H1 (cell line): ENCODE measurements at regions of chr13 and their contacts with region 1.

Region 1: GRCh38 chr13:35818633-35819067 is 312.5 kb downstream of the DCLK1 start:
- DNase-seq: no peak
- H3K4me3 ChIP-seq: no peak overlapping the region
- H3K27ac ChIP-seq: no peak overlapping the region
- H3K4me1 ChIP-seq: peaks cover 0 to 4% (median 4%) of the 10 kb centered on the region in 4 experiments; a peak in 3 of 7 replicates
- H3K27me3 ChIP-seq: no peaks in the 10 kb centered on the region; a peak in 1 of 7 replicates
- CTCF ChIP-seq: peak in 2 of 3 experiments; percentile 30 to 46; a peak in 2 of 4 replicates
- EP300 ChIP-seq: no peak
- POLR2A ChIP-seq: no peak
- RAD21 ChIP-seq: peak; percentile 56 to 61

Region 2: DNA sequence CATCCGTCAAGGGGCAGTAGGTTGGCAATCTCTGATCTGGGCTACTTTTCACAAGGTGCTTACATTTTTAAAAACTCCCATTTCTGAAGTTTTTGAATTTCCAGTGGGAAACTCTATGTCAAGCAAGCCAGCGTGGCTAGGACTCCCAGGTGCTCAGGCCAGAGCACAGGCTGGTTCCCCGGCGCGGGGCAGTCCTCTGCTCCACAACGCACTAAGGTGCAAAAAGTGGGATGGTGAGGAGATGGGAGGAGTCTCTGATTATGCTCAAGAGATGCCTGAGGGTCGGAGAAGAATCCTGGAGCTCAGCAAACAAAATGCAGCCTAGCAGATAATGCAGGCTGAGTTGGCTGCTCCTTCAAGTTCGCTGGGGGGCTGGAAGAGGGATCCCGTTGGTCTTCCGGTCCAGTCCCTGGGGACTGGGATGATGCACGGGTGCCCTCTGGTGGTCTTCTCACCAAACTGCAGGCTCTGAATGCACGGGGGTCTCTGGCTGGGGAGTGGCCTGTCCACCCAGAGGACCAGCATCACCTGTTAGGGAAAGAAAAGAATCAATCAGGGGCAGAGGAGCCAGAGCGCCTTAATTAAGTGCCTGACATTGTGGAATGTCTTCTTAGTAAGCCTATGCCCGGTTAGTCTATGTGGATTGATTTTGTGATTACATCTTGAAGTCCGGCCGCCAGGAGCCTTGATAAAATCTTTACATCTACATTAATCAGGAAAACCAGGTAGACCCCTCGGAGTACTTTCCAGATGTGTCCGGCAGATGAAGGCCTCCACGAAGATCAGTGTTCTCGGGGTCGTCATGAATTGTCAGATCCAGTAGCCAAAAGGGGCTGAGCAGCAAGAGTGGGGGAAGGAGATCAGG is 97.7 kb before region 1 on chr13:
- CTCF ChIA-PET with region 1: interaction called, 14 read pairs
- POLR2A ChIA-PET with region 1: interaction called, 3 read pairs
- DNase-seq: peak; percentile 60 to 93
- H3K4me3 ChIP-seq: no peak overlapping the region
- H3K27ac ChIP-seq: no peak overlapping the region
- H3K4me1 ChIP-seq: no peaks in the 10 kb centered on the region
- H3K27me3 ChIP-seq: no peaks in the 10 kb centered on the region
- CTCF ChIP-seq: peak; percentile 94 to 98 (median 96)
- EP300 ChIP-seq: no peak
- POLR2A ChIP-seq: no peak
- RAD21 ChIP-seq: peak; percentile 99

Region 3: GRCh38 chr13:35797991-35798390 is 20.7 kb before region 1 on chr13:
- CTCF ChIA-PET with region 1: interaction called, 23 read pairs
- POLR2A ChIA-PET with region 1: no interaction called
- DNase-seq: no peak
- H3K4me3 ChIP-seq: no peak overlapping the region
- H3K27ac ChIP-seq: no peak overlapping the region
- H3K4me1 ChIP-seq: peaks cover 0 to 3% (median 0%) of the 10 kb centered on the region in 4 experiments; a peak in 1 of 7 replicates
- H3K27me3 ChIP-seq: no peaks in the 10 kb centered on the region
- CTCF ChIP-seq: no peak
- EP300 ChIP-seq: no peak
- POLR2A ChIP-seq: no peak
- RAD21 ChIP-seq: no peak

Region 4: DNA sequence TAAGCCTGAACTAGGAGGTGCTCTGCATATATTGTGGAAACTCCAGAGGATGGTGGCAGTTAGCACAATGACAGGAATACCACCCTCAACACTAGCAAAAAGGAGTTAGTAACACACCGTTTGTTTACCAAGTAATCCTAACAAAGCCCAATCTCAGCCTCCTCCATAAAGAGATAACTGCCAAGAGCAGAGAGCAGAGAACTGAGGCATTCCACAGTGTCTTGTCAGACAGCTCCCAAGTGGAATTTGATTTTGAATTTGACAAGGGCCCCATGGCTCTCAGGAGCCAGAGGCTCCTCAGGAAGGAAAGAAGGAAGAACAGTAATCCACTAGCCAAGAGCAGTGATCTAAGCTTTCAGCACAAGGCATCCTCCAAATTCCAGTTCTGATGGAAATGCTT is 13.9 kb after region 1 on chr13:
- CTCF ChIA-PET with region 1: interaction called, 60 read pairs
- POLR2A ChIA-PET with region 1: interaction called, 3 read pairs
- DNase-seq: no peak
- H3K4me3 ChIP-seq: no peak overlapping the region
- H3K27ac ChIP-seq: no peak overlapping the region
- H3K4me1 ChIP-seq: no peaks in the 10 kb centered on the region; a peak in 1 of 7 replicates
- H3K27me3 ChIP-seq: no peaks in the 10 kb centered on the region
- CTCF ChIP-seq: no peak
- EP300 ChIP-seq: no peak
- POLR2A ChIP-seq: no peak
- RAD21 ChIP-seq: no peak

Region 5: GRCh38 chr13:36051082-36051481 is 232.4 kb after region 1 on chr13:
- CTCF ChIA-PET with region 1: no interaction called
- POLR2A ChIA-PET with region 1: no interaction called
- DNase-seq: no peak
- H3K4me3 ChIP-seq: no peak overlapping the region
- H3K27ac ChIP-seq: no peak overlapping the region
- H3K4me1 ChIP-seq: peaks cover 0 to 4% (median 2%) of the 10 kb centered on the region in 4 experiments; a peak in 1 of 7 replicates
- H3K27me3 ChIP-seq: no peaks in the 10 kb centered on the region
- CTCF ChIP-seq: no peak
- EP300 ChIP-seq: no peak
- POLR2A ChIP-seq: no peak
- RAD21 ChIP-seq: no peak

Region 6: DNA sequence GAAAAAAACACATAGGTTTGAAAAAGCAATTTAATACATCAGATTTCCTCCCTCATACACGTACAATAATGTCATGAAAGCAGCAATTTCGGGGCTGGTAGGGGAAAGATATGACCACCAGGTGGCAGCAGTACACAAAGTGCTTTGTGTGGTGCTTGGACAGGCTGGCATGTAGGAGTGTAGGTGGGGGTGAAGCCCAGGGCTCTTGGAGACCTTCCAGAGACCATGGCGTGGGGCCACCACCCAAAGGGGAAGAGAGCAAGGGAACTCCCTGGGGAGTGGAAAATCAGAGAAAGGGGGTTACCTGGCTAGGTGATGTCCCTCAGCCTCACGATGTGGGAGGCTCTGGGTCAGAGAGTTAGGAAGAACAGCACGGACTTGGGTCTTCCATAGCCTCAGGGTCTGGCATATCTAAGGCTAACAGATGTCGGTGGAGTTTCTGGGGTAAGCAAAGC is 601.8 kb after region 1 on chr13:
- CTCF ChIA-PET with region 1: no interaction called
- POLR2A ChIA-PET with region 1: no interaction called
- DNase-seq: peak in 1 of 2 experiments; percentile 87
- H3K4me3 ChIP-seq: no peak overlapping the region
- H3K27ac ChIP-seq: no peak overlapping the region
- H3K4me1 ChIP-seq: no peaks in the 10 kb centered on the region
- H3K27me3 ChIP-seq: no peaks in the 10 kb centered on the region
- CTCF ChIP-seq: peak; percentile 74 to 89 (median 79)
- EP300 ChIP-seq: no peak
- POLR2A ChIP-seq: no peak
- RAD21 ChIP-seq: peak; percentile 87 to 92